Dorsolateral prefrontal cortex (tissue), 120 donors: ENCODE measurements at regions of chr13 and their contacts with region 1.

Region 1: DNA sequence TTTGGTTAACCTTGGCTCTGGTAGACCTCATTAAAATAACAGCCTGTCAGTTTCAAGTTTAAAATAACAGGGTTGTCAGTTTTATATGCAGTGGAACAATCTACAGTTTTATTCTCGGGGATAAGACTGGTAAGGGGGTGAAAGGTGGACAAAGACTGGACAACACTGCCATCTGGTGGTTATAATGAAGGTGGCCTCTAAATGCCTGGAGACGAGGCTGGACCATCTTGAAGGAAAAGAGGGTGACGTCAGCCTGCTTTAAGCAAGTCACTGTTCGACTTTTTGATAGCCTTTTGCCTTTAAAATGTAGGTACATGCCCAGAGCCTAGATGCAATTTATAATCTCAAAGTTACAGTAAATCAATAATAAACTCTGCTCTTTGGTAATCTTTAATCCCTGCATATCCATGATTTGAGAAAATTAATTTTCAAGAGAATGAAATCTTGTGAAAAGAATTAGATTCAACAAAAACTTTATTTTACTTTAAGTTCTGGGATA is 117.0 kb downstream of the DCT start:
- DNase-seq: peak in 8 of 10 donors; percentile 24 to 81 (median 50)
- H3K4me3 ChIP-seq: no peak overlapping the region
- H3K27ac ChIP-seq: no peak overlapping the region
- H3K27me3 ChIP-seq: no peaks in the 10 kb centered on the region
- CTCF ChIP-seq: peak; percentile 77 to 98 (median 92)

Region 2: GRCh38 chr13:94182185-94182761 is 180.2 kb before region 1 on chr13:
- intact Hi-C with region 1: loop called in 1 of 2 experiments (anchors 5 kb)
- DNase-seq: no peak
- H3K4me3 ChIP-seq: no peak overlapping the region
- H3K27ac ChIP-seq: no peak overlapping the region
- H3K27me3 ChIP-seq: no peaks in the 10 kb centered on the region
- CTCF ChIP-seq: no peak